ENCODE measurements at regions of chr5 and their contacts with region 1.

Region 1: GRCh38 chr5:141557681-141558136 is 61.1 kb downstream of the DIAPH1 start:
- DNase-seq: peak; percentile 81
- ATAC-seq: peak; percentile 76
- H3K4me3 Mint-ChIP-seq: no peak overlapping the region
- H3K27ac Mint-ChIP-seq: peak overlapping the region; percentile 45
- H3K4me1 Mint-ChIP-seq: peaks cover 14% of the 10 kb centered on the region
- H3K27me3 Mint-ChIP-seq: no peaks in the 10 kb centered on the region

Region 2: DNA sequence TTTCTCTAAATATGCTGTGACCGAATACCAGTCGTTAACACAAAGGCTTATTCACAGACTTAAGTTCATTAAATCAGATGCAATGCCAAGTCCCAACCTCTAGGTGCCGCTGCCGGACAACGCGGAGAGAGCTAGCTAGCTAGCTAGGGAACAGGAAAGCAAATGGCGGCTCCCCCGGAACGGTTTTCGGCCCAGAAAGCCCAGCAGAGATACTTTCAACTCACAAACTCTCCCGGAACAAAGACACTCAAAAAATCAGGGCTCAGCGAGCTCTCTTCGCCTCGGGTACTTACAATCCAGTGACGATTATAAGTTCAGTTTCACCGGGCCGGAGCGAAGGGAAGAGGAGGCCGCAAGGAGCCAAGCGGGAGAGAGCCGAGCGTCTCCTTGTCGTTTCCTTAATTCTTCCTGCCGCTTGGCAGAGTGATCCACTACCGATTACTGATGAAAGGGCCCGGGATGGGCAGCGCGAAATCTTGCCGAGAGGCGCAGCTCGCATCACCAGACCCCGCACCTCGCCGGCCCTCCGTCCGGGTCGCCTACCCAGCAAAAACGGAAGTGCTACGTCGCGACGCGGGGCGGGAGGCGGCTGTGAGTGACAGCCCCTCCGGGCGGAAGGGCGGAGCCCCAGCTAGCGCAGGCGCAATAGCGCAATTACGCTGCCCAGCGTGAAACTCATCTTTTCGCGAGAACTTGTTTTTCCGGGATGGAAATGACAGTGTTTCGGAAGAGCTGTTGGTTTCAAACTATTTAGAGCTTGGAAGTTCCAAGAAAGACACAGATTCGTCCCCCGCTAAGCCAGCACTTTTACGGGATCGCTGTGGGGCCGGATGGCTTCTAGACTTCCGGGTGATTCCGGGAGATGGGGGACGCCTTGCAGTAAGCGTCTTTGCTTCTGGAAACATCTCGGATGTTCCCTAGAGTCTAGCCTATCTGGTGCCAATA is 237.2 kb before region 1 on chr5 and contains the start of gene TAF7:
- CTCF ChIA-PET with region 1: interaction called, 12 read pairs
- POLR2A ChIA-PET with region 1: no interaction called
- DNase-seq: peak; percentile 95
- ATAC-seq: peak; percentile 94
- H3K4me3 Mint-ChIP-seq: peak within 1 kb of the TSS; percentile 99
- H3K27ac Mint-ChIP-seq: peak within 1 kb of the TSS; percentile 100
- H3K4me1 Mint-ChIP-seq: peaks cover 33% of the 10 kb centered on the region
- H3K27me3 Mint-ChIP-seq: peaks cover 2% of the 10 kb centered on the region
- total RNA-seq, gene TAF7: 65.5 to 67.0 TPM

Region 3: GRCh38 chr5:141412854-141413539 is 144.7 kb before region 1 on chr5 and contains the start of gene PCDHGA10:
- CTCF ChIA-PET with region 1: interaction called, 30 read pairs
- POLR2A ChIA-PET with region 1: no interaction called
- DNase-seq: peak; percentile 71
- ATAC-seq: peak; percentile 75
- H3K4me3 Mint-ChIP-seq: peak within 1 kb of the TSS; percentile 71
- H3K27ac Mint-ChIP-seq: no peak within 1 kb of the TSS
- H3K4me1 Mint-ChIP-seq: peaks cover 26% of the 10 kb centered on the region
- H3K27me3 Mint-ChIP-seq: peaks cover 60% of the 10 kb centered on the region
- total RNA-seq, gene PCDHGA10: not detected

Region 4: GRCh38 chr5:141420855-141421496 is 136.7 kb before region 1 on chr5 and contains the start of gene PCDHGA11:
- CTCF ChIA-PET with region 1: interaction called, 20 read pairs
- POLR2A ChIA-PET with region 1: no interaction called
- DNase-seq: peak; percentile 53
- ATAC-seq: no peak
- H3K4me3 Mint-ChIP-seq: peak within 1 kb of the TSS; percentile 69
- H3K27ac Mint-ChIP-seq: peak within 1 kb of the TSS; percentile 35
- H3K4me1 Mint-ChIP-seq: peaks cover 11% of the 10 kb centered on the region
- H3K27me3 Mint-ChIP-seq: peaks cover 62% of the 10 kb centered on the region
- total RNA-seq, gene PCDHGA11: 0.05 TPM in 1 of 2 experiments, not detected in the other

Region 5: GRCh38 chr5:141524604-141525597 is 32.8 kb before region 1 on chr5:
- CTCF ChIA-PET with region 1: interaction called, 36 read pairs
- POLR2A ChIA-PET with region 1: no interaction called
- DNase-seq: peak; percentile 58
- ATAC-seq: peak; percentile 75
- H3K4me3 Mint-ChIP-seq: no peak overlapping the region
- H3K27ac Mint-ChIP-seq: peak overlapping the region; percentile 75
- H3K4me1 Mint-ChIP-seq: peaks cover 32% of the 10 kb centered on the region
- H3K27me3 Mint-ChIP-seq: no peaks in the 10 kb centered on the region

Region 6: GRCh38 chr5:141547488-141547887 is 10.2 kb before region 1 on chr5:
- CTCF ChIA-PET with region 1: interaction called, 15 read pairs
- POLR2A ChIA-PET with region 1: no interaction called
- DNase-seq: no peak
- ATAC-seq: no peak
- H3K4me3 Mint-ChIP-seq: no peak overlapping the region
- H3K27ac Mint-ChIP-seq: no peak overlapping the region
- H3K4me1 Mint-ChIP-seq: peaks cover 5% of the 10 kb centered on the region
- H3K27me3 Mint-ChIP-seq: no peaks in the 10 kb centered on the region

Region 7: GRCh38 chr5:141570655-141571054 is 12.9 kb after region 1 on chr5:
- CTCF ChIA-PET with region 1: interaction called, 45 read pairs
- POLR2A ChIA-PET with region 1: no interaction called
- DNase-seq: no peak
- ATAC-seq: no peak
- H3K4me3 Mint-ChIP-seq: no peak overlapping the region
- H3K27ac Mint-ChIP-seq: no peak overlapping the region
- H3K4me1 Mint-ChIP-seq: peaks cover 3% of the 10 kb centered on the region
- H3K27me3 Mint-ChIP-seq: no peaks in the 10 kb centered on the region

Measured in activated CD8-positive, alpha-beta T cell treated with anti-CD3 and anti-CD28 coated beads, Interleukin-2, amount 10 ng/mL, durations not matched to agents 7 days and 5 days (primary cell).